Mucosa of descending colon (tissue), 3 donors: ENCODE measurements at regions of chr18 and their contacts with region 1.

Region 1: GRCh38 chr18:48022531-48023329 is 92.3 kb upstream of the SMAD2 start:
- DNase-seq: peak in 1 of 3 donors; percentile 49
- ATAC-seq: peak; percentile 73
- H3K4me3 ChIP-seq: no peak overlapping the region
- H3K4me1 ChIP-seq: no peaks in the 10 kb centered on the region
- CTCF ChIP-seq: no peak

Region 2: DNA sequence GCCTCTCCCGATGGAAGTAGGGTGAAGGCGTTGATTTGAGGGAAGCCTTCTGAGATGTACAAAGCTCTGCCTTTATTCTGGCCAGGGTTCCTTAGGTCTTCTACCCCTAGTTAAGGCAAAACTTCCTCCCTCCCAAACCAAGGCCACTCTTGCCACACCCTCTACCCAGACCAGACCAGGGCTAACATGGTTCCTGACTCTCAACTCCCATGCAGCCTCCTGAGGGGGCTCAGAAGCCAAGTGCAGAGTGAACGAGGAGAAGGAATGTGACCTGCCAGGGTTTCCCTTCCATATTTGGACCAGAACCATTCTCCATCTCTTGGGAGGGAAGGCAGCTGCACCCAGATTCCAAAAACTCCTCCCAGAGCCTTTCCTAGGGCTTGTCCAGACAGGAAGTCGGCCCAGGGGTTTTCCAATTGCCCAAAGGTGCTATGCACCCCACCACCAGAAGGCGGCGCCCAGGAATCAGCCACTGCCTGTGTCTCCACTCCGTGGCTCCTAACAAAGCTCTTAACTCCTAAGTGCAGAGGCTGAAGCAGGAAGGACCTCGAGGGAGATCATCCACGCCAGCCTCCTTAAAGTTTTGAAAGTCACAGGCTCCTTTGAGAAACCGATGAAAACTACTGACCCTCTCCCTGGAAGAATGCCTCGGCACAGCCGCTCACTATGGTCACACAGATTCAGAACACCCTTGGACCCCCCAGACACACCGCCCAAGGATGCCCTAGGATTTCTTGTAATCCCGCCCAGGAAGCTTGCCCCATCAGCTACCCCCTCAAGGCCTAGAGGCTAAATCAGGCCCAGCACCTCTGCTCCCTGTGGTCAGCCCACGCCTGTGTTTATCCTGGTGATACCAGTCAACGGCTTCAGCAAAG is 250.1 kb before region 1 on chr18:
- intact Hi-C with region 1: loop called (anchors 5 to 10 kb)
- DNase-seq: peak; percentile 64 to 90 (median 83)
- ATAC-seq: peak; percentile 97
- H3K4me3 ChIP-seq: no peak overlapping the region
- H3K4me1 ChIP-seq: no peaks in the 10 kb centered on the region
- CTCF ChIP-seq: peak; percentile 90

Region 3: GRCh38 chr18:48445540-48445939 is 422.8 kb after region 1 on chr18:
- intact Hi-C with region 1: loop called (anchors 5 to 10 kb)
- DNase-seq: peak in 2 of 3 donors; percentile 84 to 90
- ATAC-seq: peak; percentile 94
- H3K4me3 ChIP-seq: no peak overlapping the region
- H3K4me1 ChIP-seq: no peaks in the 10 kb centered on the region
- CTCF ChIP-seq: peak; percentile 89